ENCODE measurements at regions of chr6 and their contacts with region 1.

Region 1: GRCh38 chr6:10722820-10723566 is at the start of gene TMEM14C:
- DNase-seq: peak; percentile 94 to 100 (median 98)

Region 2: GRCh38 chr6:10747251-10747972 is 24.4 kb after region 1 on chr6 and contains the start of gene TMEM14B:
- intact Hi-C with region 1: loop called (anchors 1 kb)
- DNase-seq: peak; percentile 98 to 100 (median 100)